OCI-LY7 (cell line): ENCODE measurements at regions of chr5 and their contacts with region 1.

Region 1: GRCh38 chr5:159040181-159040580 is 59.5 kb downstream of the EBF1 start:
- DNase-seq: peak; percentile 67
- H3K4me3 ChIP-seq: peak overlapping the region; percentile 40
- H3K27ac ChIP-seq: peak overlapping the region; percentile 64
- H3K4me1 ChIP-seq: peaks cover 70% of the 10 kb centered on the region
- CTCF ChIP-seq: no peak

Region 2: GRCh38 chr5:158599157-158599556 is 441.0 kb before region 1 on chr5:
- CTCF ChIA-PET with region 1: no interaction called
- POLR2A ChIA-PET with region 1: no interaction called
- intact Hi-C with region 1: no loop called
- DNase-seq: peak; percentile 34
- H3K4me3 ChIP-seq: no peak overlapping the region
- H3K27ac ChIP-seq: no peak overlapping the region
- H3K4me1 ChIP-seq: peaks cover 18% of the 10 kb centered on the region
- CTCF ChIP-seq: no peak

Region 3: GRCh38 chr5:159027504-159027903 is 12.7 kb before region 1 on chr5:
- CTCF ChIA-PET with region 1: no interaction called
- POLR2A ChIA-PET with region 1: interaction called, 10 read pairs
- intact Hi-C with region 1: no loop called
- DNase-seq: no peak
- H3K4me3 ChIP-seq: no peak overlapping the region
- H3K27ac ChIP-seq: no peak overlapping the region
- H3K4me1 ChIP-seq: peaks cover 10% of the 10 kb centered on the region
- CTCF ChIP-seq: no peak